ENCODE measurements at regions of chr3 and their contacts with region 1.

Region 1: GRCh38 chr3:130892759-130893375 is 1.0 kb upstream of the ATP2C1 start:
- DNase-seq: peak; percentile 86
- H3K4me3 ChIP-seq: peak overlapping the region; percentile 80
- H3K27ac ChIP-seq: peak overlapping the region; percentile 68
- H3K4me1 ChIP-seq: peaks cover 30% of the 10 kb centered on the region
- CTCF ChIP-seq: peak; percentile 97

Region 2: DNA sequence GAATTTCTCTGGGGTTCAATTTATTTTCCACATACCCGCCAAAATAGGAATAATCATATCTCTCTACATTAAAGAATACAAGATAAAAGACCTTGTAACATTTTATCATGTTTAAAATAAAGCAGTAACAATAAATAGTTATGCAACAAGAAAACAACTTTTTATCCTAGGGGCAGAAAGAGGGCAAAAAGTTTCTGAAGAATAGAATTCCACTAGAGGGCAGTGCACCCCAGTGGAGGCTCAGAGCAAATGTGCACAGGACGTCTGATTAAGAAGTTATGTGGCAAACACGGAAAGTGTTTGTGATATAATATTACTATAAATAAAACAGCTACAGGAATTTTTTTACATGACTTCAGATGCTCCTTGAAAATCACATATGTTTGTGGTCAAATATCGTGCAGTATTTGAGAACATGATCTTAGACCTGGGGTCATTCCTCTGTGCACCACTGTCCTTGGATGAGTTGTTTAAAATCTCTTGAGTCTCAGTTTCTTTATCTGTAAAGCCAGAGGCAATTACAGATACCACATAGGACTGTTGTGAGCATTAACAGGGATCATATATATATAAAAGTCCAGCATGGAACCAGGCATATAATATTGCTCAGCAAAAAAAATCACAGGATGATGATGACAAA is 133.0 kb before region 1 on chr3:
- CTCF ChIA-PET with region 1: interaction called, 3 read pairs
- POLR2A ChIA-PET with region 1: interaction called, 4 read pairs
- intact Hi-C with region 1: loop called (anchors 2 kb)
- DNase-seq: peak; percentile 64
- H3K4me3 ChIP-seq: no peak overlapping the region
- H3K27ac ChIP-seq: no peak overlapping the region
- H3K4me1 ChIP-seq: no peaks in the 10 kb centered on the region
- CTCF ChIP-seq: peak; percentile 98

Region 3: DNA sequence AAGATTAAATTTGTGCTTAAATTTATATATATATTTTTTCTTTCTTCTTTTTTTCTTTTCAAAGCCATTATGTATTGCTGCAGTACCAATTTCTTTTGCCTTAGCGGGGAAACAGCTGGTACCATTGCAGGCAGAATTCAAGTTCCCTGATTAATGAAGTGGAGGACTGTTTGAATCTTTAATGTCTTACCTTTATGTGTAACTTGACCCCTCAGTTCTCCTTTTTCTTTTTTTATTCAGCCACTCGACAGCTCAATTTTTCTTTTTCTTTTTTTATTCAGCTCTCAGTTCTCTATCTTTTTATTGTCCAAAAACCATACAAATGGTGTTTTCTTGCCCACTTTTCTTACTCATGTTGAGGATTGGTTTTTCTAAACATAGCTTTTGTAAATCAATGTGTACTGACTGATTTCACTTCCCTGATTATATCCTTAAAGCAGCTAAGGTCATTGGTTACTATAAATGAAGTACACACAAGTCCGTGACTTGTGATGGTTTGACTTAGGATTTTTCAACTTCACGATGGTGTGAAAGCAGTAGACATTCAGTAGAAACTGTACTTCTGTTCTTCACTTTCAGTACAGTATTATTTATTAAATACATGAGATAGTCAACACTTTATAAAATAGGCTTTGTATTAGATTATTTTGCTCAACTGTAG is 23.8 kb after region 1 on chr3:
- CTCF ChIA-PET with region 1: interaction called, 8 read pairs
- POLR2A ChIA-PET with region 1: interaction called, 16 read pairs
- intact Hi-C with region 1: loop called (anchors 1 kb)
- DNase-seq: peak; percentile 48
- H3K4me3 ChIP-seq: peak overlapping the region; percentile 53
- H3K27ac ChIP-seq: peak overlapping the region; percentile 84
- H3K4me1 ChIP-seq: peaks cover 34% of the 10 kb centered on the region
- CTCF ChIP-seq: no peak

Region 4: DNA sequence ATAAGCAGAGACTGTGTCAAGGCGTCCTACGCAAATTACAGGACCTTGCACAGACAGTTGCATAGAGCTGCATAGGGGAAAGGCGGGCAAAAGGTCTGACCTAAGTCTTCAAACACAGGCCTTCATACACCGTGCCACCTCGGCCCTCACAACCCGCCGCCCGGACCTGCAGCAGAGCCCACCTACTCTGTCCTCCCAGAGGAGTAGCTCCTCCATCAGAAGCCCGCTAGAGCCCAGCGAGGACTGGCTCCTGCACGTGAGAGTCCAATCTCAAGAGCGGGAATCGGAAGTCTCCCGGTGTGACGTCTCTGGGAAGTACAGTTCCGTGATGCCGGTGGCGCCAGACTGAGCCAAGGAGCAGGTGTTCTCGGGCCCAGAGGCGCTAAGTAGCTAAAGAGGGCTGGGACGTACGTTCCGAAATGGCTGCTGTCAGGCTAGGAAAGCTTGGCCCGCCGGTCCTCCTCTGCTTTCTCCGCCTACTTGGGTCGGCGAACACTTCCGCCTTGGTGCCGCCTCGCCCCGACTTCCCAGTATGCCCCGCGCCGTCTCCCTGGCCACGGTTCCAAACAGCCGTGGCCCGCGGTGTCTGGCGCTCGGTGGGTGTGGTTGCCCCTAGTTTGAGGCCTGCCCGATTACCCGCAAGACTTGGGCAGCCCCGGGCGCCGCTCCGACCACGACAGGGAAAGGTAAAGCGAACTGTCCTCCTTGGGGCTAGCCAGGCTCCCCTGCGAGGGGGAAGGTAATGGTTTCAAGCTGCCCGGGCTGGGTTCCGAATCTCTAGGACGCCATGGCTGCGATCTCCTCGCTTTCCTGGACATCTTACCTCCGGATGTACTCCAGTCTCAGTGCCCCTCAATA is 133.7 kb after region 1 on chr3 and contains the starts of genes ASTE1 and NEK11:
- CTCF ChIA-PET with region 1: no interaction called
- POLR2A ChIA-PET with region 1: interaction called, 12 read pairs
- intact Hi-C with region 1: loop called (anchors 1 kb)
- DNase-seq: peak; percentile 86
- H3K4me3 ChIP-seq: peak within 1 kb of the TSS; percentile 75
- H3K27ac ChIP-seq: peak within 1 kb of the TSS; percentile 62
- H3K4me1 ChIP-seq: peaks cover 19% of the 10 kb centered on the region
- CTCF ChIP-seq: no peak
- total RNA-seq, gene ASTE1: 8.2 and 14.2 TPM in 2 replicates
- total RNA-seq, gene NEK11: 0.15 and 0.47 TPM in 2 replicates

Region 5: DNA sequence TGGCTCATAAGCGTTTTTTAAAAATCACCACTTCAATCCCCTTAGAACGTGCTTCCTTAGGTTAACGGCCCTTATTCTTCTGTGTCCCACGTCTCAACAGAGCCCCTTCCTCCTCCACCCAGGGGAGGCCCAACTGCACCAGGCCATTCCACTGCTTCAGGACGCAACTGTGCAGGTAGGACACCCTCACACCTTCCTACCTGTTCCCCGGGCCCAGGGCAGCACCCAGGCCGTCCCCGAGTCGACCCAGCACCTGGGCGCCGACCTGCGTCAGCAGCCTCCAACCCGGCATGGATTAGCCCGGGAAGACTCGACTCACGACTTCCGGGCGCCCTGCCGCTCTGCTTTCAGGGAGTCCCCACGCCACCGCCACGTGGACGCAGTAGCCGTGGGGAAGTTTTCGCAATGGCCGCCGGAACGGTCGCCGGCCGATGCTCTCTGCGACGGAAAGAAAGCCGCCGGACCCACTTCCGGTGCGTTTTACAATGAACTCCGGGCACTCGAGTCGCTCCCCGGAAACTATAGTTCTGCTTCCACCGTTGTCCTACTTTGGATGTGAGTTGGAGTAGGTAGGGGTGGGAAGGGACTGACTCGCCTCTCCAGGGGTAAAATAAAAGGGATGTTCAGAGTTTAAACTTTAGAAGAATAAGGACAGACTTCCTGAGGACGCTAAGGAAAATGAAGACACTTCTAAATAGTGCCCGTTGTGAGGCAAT is 609.8 kb after region 1 on chr3 and contains the start of gene MRPL3:
- CTCF ChIA-PET with region 1: no interaction called
- POLR2A ChIA-PET with region 1: no interaction called
- intact Hi-C with region 1: loop called (anchors 5 kb)
- DNase-seq: peak; percentile 92
- H3K4me3 ChIP-seq: peak within 1 kb of the TSS; percentile 99
- H3K27ac ChIP-seq: peak within 1 kb of the TSS; percentile 60
- H3K4me1 ChIP-seq: peaks cover 19% of the 10 kb centered on the region
- CTCF ChIP-seq: no peak
- total RNA-seq, gene MRPL3: 121 and 135 TPM in 2 replicates

Region 6: GRCh38 chr3:132416807-132417694 is 1524.2 kb after region 1 on chr3 and contains the start of gene DNAJC13:
- CTCF ChIA-PET with region 1: no interaction called
- POLR2A ChIA-PET with region 1: no interaction called
- intact Hi-C with region 1: loop called (anchors 10 kb)
- DNase-seq: peak; percentile 95
- H3K4me3 ChIP-seq: peak within 1 kb of the TSS; percentile 97
- H3K27ac ChIP-seq: peak within 1 kb of the TSS; percentile 64
- H3K4me1 ChIP-seq: peaks cover 27% of the 10 kb centered on the region
- CTCF ChIP-seq: no peak
- total RNA-seq, gene DNAJC13: 22.8 and 30.7 TPM in 2 replicates